Kidney (tissue), 22 donors: ENCODE measurements at regions of chr6 and their contacts with region 1.

Region 1: DNA sequence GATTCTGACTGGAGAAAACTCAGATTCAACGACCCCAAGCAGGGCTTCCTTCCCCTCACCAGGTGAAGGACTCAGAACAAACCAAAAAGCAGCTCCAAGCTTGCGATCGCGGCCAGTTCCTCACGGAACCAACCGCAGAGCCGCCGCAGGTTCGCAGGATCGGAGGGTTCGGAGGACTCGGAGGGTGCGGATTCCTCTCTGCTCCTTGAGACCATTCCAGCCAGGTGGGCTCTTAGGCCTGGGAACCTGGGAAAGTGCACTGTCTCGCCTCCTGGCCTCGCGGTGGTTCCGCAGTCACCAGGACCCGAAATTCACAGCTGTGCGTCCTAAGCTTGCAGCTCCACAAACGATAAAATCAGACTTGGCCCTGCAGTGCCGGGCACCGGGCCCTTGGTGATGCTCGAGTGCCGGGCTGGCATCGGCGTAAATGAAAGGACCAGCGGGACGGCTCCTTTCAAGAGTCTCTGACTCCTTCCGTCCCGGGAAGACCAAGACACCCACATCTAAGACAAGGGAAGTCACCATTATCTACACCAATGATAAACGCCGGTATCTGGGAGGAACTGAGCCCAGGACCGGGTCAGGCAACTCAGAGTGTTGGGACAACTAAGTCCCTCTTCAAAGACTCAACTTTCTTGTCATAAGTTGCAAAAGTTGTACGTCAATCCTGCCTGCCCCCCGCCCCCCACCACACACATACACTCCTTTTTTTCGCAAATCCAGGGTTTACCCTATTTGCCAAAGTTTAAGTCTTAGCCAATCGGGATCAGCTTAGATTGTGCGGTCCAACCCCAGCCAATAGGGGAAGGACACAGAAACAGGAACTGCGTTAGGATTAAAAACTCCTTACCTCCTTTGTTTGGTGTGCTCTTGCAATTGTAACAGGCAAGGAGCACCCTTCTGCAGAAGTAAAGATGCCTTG is 69.8 kb upstream of the PRSS16 start:
- DNase-seq: peak; percentile 89 to 94 (median 92)
- H3K4me3 ChIP-seq: peak overlapping the region; percentile 91 to 99 (median 98)
- H3K27ac ChIP-seq: peak overlapping the region; percentile 49 to 56
- H3K4me1 ChIP-seq: no peaks in the 10 kb centered on the region
- H3K27me3 ChIP-seq: no peaks in the 10 kb centered on the region
- CTCF ChIP-seq: peak; percentile 33

Region 2: GRCh38 chr6:27303613-27304272 is 126.0 kb after region 1 on chr6:
- intact Hi-C with region 1: no loop called
- DNase-seq: no peak
- H3K4me3 ChIP-seq: no peak overlapping the region
- H3K27ac ChIP-seq: no peak overlapping the region
- H3K4me1 ChIP-seq: no peaks in the 10 kb centered on the region
- H3K27me3 ChIP-seq: peaks cover 43% of the 10 kb centered on the region
- CTCF ChIP-seq: no peak

Region 3: DNA sequence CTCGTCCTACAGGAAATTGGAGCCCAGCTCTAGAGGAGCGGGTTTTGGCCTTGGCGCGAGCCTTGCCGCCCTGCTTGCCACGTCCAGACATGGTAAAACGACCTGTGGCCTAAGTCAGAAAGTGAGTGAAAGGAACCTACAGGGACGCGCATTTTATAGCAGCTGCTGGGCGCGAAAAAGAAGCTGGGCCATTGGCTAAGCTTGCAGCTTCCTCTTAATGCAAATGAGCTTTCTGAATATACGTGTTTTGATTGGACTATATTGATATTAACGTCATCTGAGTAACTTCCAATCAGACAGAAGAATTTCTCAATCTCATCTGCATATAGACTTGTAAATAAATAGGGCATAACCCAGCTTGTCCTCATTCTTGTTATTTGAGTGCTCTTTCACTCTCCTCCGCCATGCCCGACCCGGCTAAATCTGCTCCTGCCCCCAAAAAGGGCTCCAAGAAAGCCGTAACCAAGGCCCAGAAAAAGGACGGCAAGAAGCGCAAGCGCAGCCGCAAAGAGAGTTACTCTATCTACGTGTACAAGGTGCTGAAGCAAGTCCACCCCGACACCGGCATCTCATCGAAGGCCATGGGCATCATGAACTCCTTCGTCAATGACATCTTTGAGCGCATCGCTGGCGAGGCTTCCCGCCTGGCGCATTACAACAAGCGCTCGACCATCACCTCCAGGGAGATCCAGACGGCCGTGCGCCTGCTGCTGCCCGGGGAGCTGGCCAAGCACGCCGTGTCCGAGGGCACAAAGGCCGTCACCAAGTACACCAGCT is 715.5 kb after region 1 on chr6:
- intact Hi-C with region 1: loop called (anchors 10 kb)
- DNase-seq: peak; percentile 88 to 98 (median 98)
- H3K4me3 ChIP-seq: peak overlapping the region; percentile 88 to 100 (median 93)
- H3K27ac ChIP-seq: peak overlapping the region in 1 of 2 donors; percentile 61
- H3K4me1 ChIP-seq: peaks cover 0 to 12% (median 9%) of the 10 kb centered on the region in 3 donors
- H3K27me3 ChIP-seq: no peaks in the 10 kb centered on the region
- CTCF ChIP-seq: no peak